Activated B cell treated with CpG ODN at 0.5 μM for 24 hours (primary cell): ENCODE measurements at regions of chr13 and their contacts with region 1.

Region 1: DNA sequence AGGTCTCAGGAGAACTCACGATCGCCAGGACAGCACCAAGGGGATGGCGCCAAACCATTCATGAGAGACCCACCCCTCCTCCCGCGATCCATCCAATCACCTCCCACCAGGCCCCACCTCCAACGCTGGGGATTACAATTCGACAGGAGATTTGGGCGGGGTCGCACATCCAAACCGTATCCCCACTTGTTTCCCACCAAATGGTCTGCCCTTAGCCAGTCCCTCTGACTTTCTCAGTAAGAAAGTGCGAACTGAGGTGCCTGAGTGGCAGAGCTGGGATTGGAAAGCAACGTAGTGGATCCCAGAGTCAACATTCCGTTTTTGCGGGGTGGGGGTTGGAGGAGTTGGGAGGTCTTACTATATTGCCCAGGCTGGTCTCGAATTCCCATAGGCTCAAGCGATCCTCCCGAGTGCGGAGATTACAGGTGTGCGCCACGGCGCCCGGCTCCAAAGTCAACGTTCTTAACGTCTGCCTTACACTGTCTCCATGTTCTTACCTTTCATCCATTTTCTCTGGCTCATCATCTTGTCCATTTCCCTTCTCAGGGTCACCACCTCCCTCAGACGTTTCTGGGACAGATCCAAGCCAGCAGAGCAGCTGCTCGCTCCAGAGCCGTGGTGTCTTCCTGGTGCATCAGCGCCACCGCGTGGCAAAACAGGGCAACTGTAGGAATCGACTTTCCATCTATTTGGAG is 102.7 kb upstream of the ABCC4 start:
- DNase-seq: peak; percentile 61
- ATAC-seq: peak; percentile 79
- H3K4me3 Mint-ChIP-seq: peak overlapping the region; percentile 83
- H3K27ac Mint-ChIP-seq: no peak overlapping the region
- H3K4me1 Mint-ChIP-seq: peaks cover 11% of the 10 kb centered on the region
- H3K27me3 Mint-ChIP-seq: peaks cover 21% of the 10 kb centered on the region
- CTCF ChIP-seq: peak; percentile 61

Region 2: GRCh38 chr13:94620286-94620896 is 783.6 kb before region 1 on chr13:
- CTCF ChIA-PET with region 1: interaction called, 9 read pairs
- POLR2A ChIA-PET with region 1: no interaction called
- intact Hi-C with region 1: loop called (anchors 1 kb)
- DNase-seq: no peak
- ATAC-seq: no peak
- H3K4me3 Mint-ChIP-seq: no peak overlapping the region
- H3K27ac Mint-ChIP-seq: no peak overlapping the region
- H3K4me1 Mint-ChIP-seq: peaks cover 3% of the 10 kb centered on the region
- H3K27me3 Mint-ChIP-seq: no peaks in the 10 kb centered on the region
- CTCF ChIP-seq: no peak

Region 3: GRCh38 chr13:95128045-95128643 is 275.8 kb before region 1 on chr13:
- CTCF ChIA-PET with region 1: no interaction called
- POLR2A ChIA-PET with region 1: no interaction called
- intact Hi-C with region 1: no loop called
- DNase-seq: no peak
- ATAC-seq: no peak
- H3K4me3 Mint-ChIP-seq: no peak overlapping the region
- H3K27ac Mint-ChIP-seq: no peak overlapping the region
- H3K4me1 Mint-ChIP-seq: no peaks in the 10 kb centered on the region
- H3K27me3 Mint-ChIP-seq: no peaks in the 10 kb centered on the region
- CTCF ChIP-seq: no peak

Region 4: DNA sequence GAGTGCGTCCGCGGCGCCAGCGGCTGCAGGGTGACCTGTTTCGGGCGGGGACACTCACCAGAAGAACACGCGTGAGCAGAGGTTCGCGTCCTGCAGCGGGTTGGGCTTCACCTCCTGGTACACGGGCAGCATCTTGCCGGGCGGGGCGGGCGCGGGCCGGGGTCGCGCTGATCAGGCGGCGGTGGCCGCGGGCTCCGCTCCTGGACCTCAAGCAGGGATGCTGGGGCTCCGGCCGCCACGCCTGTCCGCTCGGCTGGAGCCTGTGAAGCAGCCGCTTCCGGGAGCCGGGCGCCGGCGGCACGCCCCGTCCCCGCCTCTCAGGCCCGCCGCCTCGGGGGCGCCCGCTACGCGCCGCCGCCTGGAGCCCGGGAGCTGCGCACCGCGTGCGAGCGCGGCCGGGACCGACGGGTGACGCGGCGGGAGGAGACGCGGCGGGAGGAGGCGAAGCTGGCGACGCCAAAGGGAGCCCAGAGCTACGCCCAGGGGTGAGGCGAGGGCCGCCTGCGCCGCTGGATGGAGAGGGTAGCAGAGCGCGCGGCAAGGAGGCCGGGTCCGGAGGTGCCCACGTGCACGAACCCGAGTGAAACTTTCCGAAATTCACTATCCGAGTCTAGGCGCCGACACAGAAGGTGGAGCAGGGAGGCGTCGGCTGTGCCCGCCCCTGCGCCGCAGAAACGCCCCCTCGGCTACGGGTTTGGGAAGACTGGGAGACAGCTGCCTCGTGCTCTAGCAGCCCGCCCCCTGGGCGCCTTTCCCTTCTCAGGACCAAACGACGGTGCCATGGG is 102.6 kb before region 1 on chr13 and contains the start of gene ABCC4:
- CTCF ChIA-PET with region 1: interaction called, 29 read pairs
- POLR2A ChIA-PET with region 1: no interaction called
- intact Hi-C with region 1: loop called (anchors 1 kb)
- DNase-seq: peak; percentile 61
- ATAC-seq: peak; percentile 82
- H3K4me3 Mint-ChIP-seq: peak within 1 kb of the TSS; percentile 83
- H3K27ac Mint-ChIP-seq: peak within 1 kb of the TSS; percentile 38
- H3K4me1 Mint-ChIP-seq: peaks cover 26% of the 10 kb centered on the region
- H3K27me3 Mint-ChIP-seq: no peaks in the 10 kb centered on the region
- CTCF ChIP-seq: no peak
- total RNA-seq, gene ABCC4: 10.8 and 11.7 TPM in 2 replicates

Region 5: DNA sequence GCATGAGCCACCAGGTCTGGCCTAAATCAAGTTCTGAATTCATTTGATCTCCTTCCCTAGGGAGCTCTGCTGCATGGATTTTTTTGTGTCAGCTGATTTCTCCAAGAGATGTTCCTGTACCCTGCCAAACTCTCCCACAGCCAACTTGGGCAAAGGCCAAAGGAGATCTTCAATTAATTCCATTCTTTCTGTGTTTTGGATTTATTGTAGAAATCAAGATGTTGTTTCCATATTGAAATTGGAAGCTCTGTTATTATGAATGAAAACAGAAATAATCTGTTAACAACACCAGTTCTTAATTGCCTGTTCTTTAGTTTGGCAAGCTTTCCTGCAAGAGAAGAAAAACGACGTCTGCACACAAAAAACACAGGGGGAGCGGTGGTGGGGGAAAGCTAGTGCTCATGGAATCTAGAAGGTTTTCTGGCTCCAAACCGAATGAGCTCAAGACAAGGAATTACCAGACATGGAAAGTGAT is 16.2 kb before region 1 on chr13:
- CTCF ChIA-PET with region 1: interaction called, 10 read pairs
- POLR2A ChIA-PET with region 1: no interaction called
- intact Hi-C with region 1: no loop called
- DNase-seq: no peak
- ATAC-seq: no peak
- H3K4me3 Mint-ChIP-seq: no peak overlapping the region
- H3K27ac Mint-ChIP-seq: no peak overlapping the region
- H3K4me1 Mint-ChIP-seq: peaks cover 32% of the 10 kb centered on the region
- H3K27me3 Mint-ChIP-seq: peaks cover 55% of the 10 kb centered on the region
- CTCF ChIP-seq: no peak

Region 6: GRCh38 chr13:95834134-95834765 is 430.3 kb after region 1 on chr13:
- CTCF ChIA-PET with region 1: interaction called, 9 read pairs
- POLR2A ChIA-PET with region 1: no interaction called
- intact Hi-C with region 1: loop called (anchors 2 kb)
- DNase-seq: peak; percentile 45
- ATAC-seq: peak; percentile 66
- H3K4me3 Mint-ChIP-seq: no peak overlapping the region
- H3K27ac Mint-ChIP-seq: no peak overlapping the region
- H3K4me1 Mint-ChIP-seq: no peaks in the 10 kb centered on the region
- H3K27me3 Mint-ChIP-seq: peaks cover 2% of the 10 kb centered on the region
- CTCF ChIP-seq: peak; percentile 94